Tibial artery (tissue), 4 donors: ENCODE measurements at regions of chr5 and their contacts with region 1.

Region 1: GRCh38 chr5:129069292-129069691 is 25.3 kb upstream of the ISOC1 start:
- DNase-seq: no peak
- H3K4me3 ChIP-seq: no peak overlapping the region
- H3K27ac ChIP-seq: no peak overlapping the region
- H3K4me1 ChIP-seq: no peaks in the 10 kb centered on the region
- H3K27me3 ChIP-seq: no peaks in the 10 kb centered on the region
- CTCF ChIP-seq: no peak

Region 2: GRCh38 chr5:129101803-129102202 is 32.5 kb after region 1 on chr5:
- intact Hi-C with region 1: loop called (anchors 1 kb)
- DNase-seq: no peak
- H3K4me3 ChIP-seq: no peak overlapping the region
- H3K27ac ChIP-seq: no peak overlapping the region
- H3K4me1 ChIP-seq: peaks cover 0 to 5% (median 0%) of the 10 kb centered on the region in 4 donors
- H3K27me3 ChIP-seq: no peaks in the 10 kb centered on the region
- CTCF ChIP-seq: no peak